ENCODE measurements at regions of chr12 and their contacts with region 1.

Region 1: GRCh38 chr12:95918194-95918993 is 24.0 kb downstream of the CCDC38 start:
- DNase-seq: peak; percentile 44
- H3K4me3 Mint-ChIP-seq: no peak overlapping the region
- H3K27ac Mint-ChIP-seq: no peak overlapping the region
- H3K4me1 Mint-ChIP-seq: no peaks in the 10 kb centered on the region
- H3K27me3 Mint-ChIP-seq: peaks cover 15% of the 10 kb centered on the region

Region 2: GRCh38 chr12:95545731-95546490 is 372.5 kb before region 1 on chr12:
- CTCF ChIA-PET with region 1: no interaction called
- POLR2A ChIA-PET with region 1: no interaction called
- DNase-seq: no peak
- H3K4me3 Mint-ChIP-seq: no peak overlapping the region
- H3K27ac Mint-ChIP-seq: no peak overlapping the region
- H3K4me1 Mint-ChIP-seq: peaks cover 15% of the 10 kb centered on the region
- H3K27me3 Mint-ChIP-seq: peaks cover 35% of the 10 kb centered on the region

Region 3: DNA sequence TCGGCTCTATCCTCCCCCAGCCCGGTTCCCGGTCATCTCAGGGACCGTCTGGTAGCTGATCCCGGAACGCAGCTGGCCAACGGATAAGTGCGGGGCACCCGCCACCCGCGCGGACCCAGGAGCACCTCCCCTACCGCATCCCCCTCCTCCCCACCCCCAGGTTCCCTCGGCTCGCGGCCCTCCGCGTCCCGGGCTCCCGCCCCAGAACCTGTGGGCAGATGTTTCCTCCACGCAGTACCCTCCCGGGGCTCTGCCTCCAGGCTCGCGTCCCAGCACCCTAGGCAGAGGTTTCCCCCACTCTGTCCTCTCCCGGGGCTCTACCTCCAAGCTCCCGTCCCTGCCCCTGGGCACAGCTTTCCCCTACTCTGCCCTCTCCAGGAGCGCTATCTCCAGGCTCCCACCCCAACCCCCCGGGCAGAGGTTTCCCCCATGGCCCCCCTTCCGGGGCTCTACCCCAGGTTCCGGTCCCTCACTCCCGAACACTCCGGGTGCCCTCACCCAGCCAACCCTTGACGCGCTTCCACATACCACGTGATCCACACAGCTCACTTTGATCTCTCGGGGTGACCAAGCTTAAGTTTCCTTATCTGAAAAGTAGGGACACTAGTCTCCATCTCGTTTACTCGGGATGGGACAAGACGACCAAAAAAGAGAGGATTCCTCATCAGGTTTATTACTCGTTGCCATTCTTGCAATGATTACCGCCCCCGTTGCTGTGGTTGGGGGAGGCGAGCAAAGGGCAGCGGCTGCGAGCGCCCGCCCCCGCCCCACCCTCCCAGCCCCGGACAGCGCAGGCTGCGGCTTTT is 24.3 kb after region 1 on chr12 and contains the start of gene CCDC38:
- CTCF ChIA-PET with region 1: interaction called, 17 read pairs
- POLR2A ChIA-PET with region 1: no interaction called
- DNase-seq: peak; percentile 86
- H3K4me3 Mint-ChIP-seq: peak within 1 kb of the TSS; percentile 95
- H3K27ac Mint-ChIP-seq: peak within 1 kb of the TSS; percentile 85
- H3K4me1 Mint-ChIP-seq: peaks cover 12% of the 10 kb centered on the region
- H3K27me3 Mint-ChIP-seq: peaks cover 6% of the 10 kb centered on the region
- total RNA-seq, gene CCDC38: not detected

Region 4: GRCh38 chr12:95959107-95959506 is 40.7 kb after region 1 on chr12:
- CTCF ChIA-PET with region 1: interaction called, 11 read pairs
- POLR2A ChIA-PET with region 1: no interaction called
- DNase-seq: no peak
- H3K4me3 Mint-ChIP-seq: no peak overlapping the region
- H3K27ac Mint-ChIP-seq: no peak overlapping the region
- H3K4me1 Mint-ChIP-seq: no peaks in the 10 kb centered on the region
- H3K27me3 Mint-ChIP-seq: no peaks in the 10 kb centered on the region

Region 5: GRCh38 chr12:96140174-96140573 is 221.8 kb after region 1 on chr12:
- CTCF ChIA-PET with region 1: no interaction called
- POLR2A ChIA-PET with region 1: no interaction called
- DNase-seq: no peak
- H3K4me3 Mint-ChIP-seq: no peak overlapping the region
- H3K27ac Mint-ChIP-seq: no peak overlapping the region
- H3K4me1 Mint-ChIP-seq: peaks cover 45% of the 10 kb centered on the region
- H3K27me3 Mint-ChIP-seq: peaks cover 1% of the 10 kb centered on the region